ENCODE measurements at regions of chr5 and their contacts with region 1.

Region 1: GRCh38 chr5:142587354-142587965 is 98.4 kb downstream of the FGF1 start:
- DNase-seq: no peak
- H3K4me3 ChIP-seq: no peak overlapping the region
- H3K27ac ChIP-seq: no peak overlapping the region
- H3K4me1 ChIP-seq: peaks cover 2 to 6% of the 10 kb centered on the region in 2 experiments; a peak in 2 of 4 replicates
- H3K27me3 ChIP-seq: no peaks in the 10 kb centered on the region
- CTCF ChIP-seq: peak; percentile 61
- EP300 ChIP-seq: no peak
- RAD21 ChIP-seq: peak; percentile 50

Region 2: GRCh38 chr5:142576303-142576702 is 11.2 kb before region 1 on chr5:
- CTCF ChIA-PET with region 1: interaction called, 20 read pairs
- POLR2A ChIA-PET with region 1: no interaction called
- DNase-seq: no peak
- H3K4me3 ChIP-seq: no peak overlapping the region
- H3K27ac ChIP-seq: no peak overlapping the region
- H3K4me1 ChIP-seq: no peaks in the 10 kb centered on the region; a peak in 1 of 4 replicates
- H3K27me3 ChIP-seq: no peaks in the 10 kb centered on the region
- CTCF ChIP-seq: no peak
- EP300 ChIP-seq: no peak
- RAD21 ChIP-seq: no peak

Region 3: GRCh38 chr5:142597546-142598341 is 10.3 kb after region 1 on chr5:
- CTCF ChIA-PET with region 1: interaction called, 16 read pairs
- POLR2A ChIA-PET with region 1: no interaction called
- DNase-seq: no peak
- H3K4me3 ChIP-seq: 0 out of 4 replicates have a peak overlapping the region, but pooled peaks of 1 of the 2 experiments have one; percentile 13
- H3K27ac ChIP-seq: peak overlapping the region in 1 of 2 experiments; percentile 82; a peak in 3 of 4 replicates
- H3K4me1 ChIP-seq: peaks cover 6 to 17% of the 10 kb centered on the region in 2 experiments; a peak in 2 of 4 replicates
- H3K27me3 ChIP-seq: no peaks in the 10 kb centered on the region
- CTCF ChIP-seq: peak; percentile 54
- EP300 ChIP-seq: no peak
- RAD21 ChIP-seq: no peak

Measured in SK-N-SH (cell line).